ENCODE measurements at regions of chr6 and their contacts with region 1.

Region 1: DNA sequence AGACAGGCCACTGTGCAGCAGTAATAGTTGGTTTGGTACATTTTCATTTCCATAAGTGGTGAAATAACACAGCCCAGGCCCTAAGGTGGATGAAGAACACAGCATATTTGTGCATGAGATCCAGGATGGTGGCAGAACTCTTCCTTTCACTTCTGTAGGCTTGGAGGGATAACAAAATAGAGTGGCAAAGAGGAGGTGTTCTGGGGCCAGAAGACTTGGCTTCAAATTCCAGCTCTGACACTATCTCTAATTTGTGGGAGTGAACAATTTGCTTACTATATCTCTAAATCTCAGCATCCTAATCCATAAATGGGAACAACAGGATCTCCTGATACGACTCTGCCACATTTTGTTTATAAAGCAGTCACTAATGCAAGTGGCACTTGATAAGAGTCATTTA is 111.7 kb upstream of the FAM184A start:
- DNase-seq: no peak
- ATAC-seq: no peak
- H3K4me3 ChIP-seq: no peak overlapping the region
- H3K27ac ChIP-seq: no peak overlapping the region
- H3K4me1 ChIP-seq: no peaks in the 10 kb centered on the region
- H3K27me3 ChIP-seq: no peaks in the 10 kb centered on the region
- CTCF ChIP-seq: no peak
- POLR2A ChIP-seq: no peak
- RAD21 ChIP-seq: no peak

Region 2: DNA sequence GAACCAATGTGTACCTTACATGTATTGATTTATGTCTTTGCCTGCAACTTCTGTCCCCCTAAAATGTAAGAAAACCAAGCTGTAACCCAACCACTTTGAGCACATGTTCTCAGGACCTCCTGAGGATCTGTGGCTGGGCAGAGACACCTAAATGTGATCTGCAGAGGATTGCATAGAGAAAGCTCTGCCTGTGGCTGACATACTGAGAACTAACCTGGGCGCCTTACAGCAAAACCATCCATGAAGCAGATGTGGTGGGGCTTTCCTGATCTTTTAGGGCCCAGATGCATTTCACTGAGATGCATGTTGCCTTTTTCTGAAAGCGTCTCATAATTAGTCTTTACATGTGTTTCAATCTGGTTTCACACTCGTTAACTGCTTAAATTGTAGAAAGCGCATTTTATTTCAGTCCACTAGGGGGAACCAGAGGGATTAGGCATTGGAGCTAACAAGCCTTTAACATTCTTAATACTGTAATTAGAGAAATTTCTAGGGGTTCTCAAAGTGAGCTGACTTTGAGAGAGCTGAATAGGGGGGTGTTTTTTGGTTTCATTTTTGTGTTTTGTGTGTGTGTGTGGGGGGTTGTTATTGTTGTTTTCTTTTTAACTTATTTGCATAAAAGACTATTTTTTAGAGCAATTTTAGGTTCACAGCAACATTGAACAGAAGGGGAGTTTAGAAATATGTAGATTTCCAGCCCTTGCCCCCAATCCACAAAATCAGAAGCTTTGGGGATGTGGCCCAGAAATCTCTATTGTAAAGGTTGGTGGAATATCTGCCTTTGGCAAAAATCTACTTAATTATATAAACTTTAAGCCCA is 60.8 kb before region 1 on chr6:
- CTCF ChIA-PET with region 1: no interaction called
- POLR2A ChIA-PET with region 1: no interaction called
- dilution Hi-C with region 1: no loop called
- in situ Hi-C with region 1: no loop called
- intact Hi-C with region 1: no loop called
- DNase-seq: peak; percentile 76
- ATAC-seq: peak; percentile 85
- H3K4me3 ChIP-seq: no peak overlapping the region
- H3K27ac ChIP-seq: no peak overlapping the region
- H3K4me1 ChIP-seq: 0 out of 2 replicates have a peak, but pooled peaks cover 3% of the 10 kb centered on the region
- H3K27me3 ChIP-seq: peaks cover 2% of the 10 kb centered on the region; the same call in 1 of the 2 replicates
- CTCF ChIP-seq: peak; percentile 84
- POLR2A ChIP-seq: no peak
- RAD21 ChIP-seq: peak; percentile 75

Region 3: DNA sequence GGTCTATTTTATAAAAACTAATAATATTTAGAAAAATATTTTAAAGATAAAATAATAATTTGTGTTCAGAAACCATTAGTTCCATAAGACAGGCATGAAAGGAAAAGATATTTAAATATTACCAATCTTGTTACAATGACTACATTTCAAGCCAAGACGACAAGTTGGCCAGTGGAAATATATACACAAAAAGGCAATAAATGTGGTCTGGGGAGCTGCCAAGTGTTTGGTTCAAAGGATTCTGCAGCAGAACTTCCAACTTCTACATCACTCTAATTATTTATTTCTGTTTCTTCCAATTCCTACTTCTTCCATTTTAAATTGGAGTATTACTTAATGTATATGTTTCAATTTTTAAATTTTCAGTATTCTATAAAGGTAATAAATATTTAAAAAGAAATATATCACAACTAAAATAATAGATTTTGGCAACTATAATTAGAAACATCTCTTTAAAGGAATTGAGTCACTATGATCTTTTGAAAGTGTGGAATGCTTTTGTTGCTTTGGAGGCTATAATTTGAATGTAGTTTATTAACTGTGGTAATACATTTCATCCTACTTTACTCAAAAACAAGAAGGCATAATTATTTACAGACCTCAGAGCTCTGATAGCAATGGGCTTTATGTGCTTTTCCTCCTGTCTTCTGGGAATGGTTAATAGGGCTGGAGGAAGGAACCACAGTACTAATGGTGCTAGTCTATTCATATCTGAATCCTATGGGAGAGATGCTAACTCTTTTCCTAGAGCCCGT is 18.0 kb after region 1 on chr6:
- CTCF ChIA-PET with region 1: no interaction called
- POLR2A ChIA-PET with region 1: interaction called, 3 read pairs
- dilution Hi-C with region 1: no loop called
- in situ Hi-C with region 1: no loop called
- intact Hi-C with region 1: loop called (anchors 2 kb)
- DNase-seq: peak; percentile 66
- ATAC-seq: no peak
- H3K4me3 ChIP-seq: no peak overlapping the region
- H3K27ac ChIP-seq: no peak overlapping the region
- H3K4me1 ChIP-seq: peaks cover 3% of the 10 kb centered on the region; the same call in 1 of the 2 replicates
- H3K27me3 ChIP-seq: no peaks in the 10 kb centered on the region
- CTCF ChIP-seq: no peak
- POLR2A ChIP-seq: no peak
- RAD21 ChIP-seq: no peak

Measured in IMR-90 (cell line).